ENCODE measurements at regions of chr17 and their contacts with region 1.

Region 1: DNA sequence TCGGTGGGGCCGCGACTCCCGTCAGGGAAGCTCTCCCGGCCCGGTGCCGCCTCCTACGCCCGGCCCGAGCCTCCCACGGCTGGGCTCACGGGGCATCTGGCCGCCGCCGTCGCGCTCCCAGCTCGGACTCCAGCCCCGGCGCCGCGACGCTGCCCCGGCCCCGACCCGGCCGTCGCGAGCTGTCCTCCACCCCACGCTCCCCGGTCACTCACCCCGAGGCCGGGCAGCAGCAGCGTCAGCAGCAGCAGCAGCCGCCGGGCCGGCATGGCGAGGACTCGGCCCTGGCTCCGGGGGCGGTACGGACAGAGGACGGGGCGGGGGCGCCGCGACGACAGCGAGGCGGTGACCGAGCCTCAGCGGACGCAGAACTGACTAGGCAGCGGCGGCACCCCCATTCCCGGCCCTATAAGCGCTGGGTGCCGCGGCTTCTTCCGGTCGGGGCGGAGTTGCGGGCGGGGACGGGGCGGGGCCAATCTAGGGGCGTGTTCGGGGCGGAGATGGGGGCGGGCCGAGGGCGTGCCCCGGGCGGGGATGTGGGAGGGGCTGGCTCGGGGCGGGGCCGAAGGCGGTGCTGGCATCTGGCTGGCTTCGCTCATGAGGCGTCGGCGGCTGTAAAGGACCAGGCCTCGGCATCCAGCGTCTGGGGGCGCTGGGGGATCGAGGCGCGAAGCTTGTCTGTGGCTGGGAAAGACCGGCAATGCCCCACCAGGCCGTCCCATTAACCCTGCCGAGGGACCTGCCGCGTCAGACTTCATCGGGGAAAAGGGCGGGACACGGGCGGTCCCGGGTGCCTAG is at the start of gene ERN1:
- DNase-seq: peak; percentile 92
- H3K4me3 Mint-ChIP-seq: peak within 1 kb of the TSS; percentile 90
- H3K27ac Mint-ChIP-seq: peak within 1 kb of the TSS; percentile 92
- H3K4me1 Mint-ChIP-seq: peaks cover 52% of the 10 kb centered on the region
- H3K27me3 Mint-ChIP-seq: no peaks in the 10 kb centered on the region
- total RNA-seq, gene ERN1: 21.9 to 22.0 TPM

Region 2: GRCh38 chr17:63919311-63919723 is 210.6 kb before region 1 on chr17:
- CTCF ChIA-PET with region 1: interaction called, 41 read pairs
- intact Hi-C with region 1: loop called (anchors 1 kb)
- DNase-seq: peak; percentile 86
- H3K4me3 Mint-ChIP-seq: no peak overlapping the region
- H3K27ac Mint-ChIP-seq: no peak overlapping the region
- H3K4me1 Mint-ChIP-seq: peaks cover 5% of the 10 kb centered on the region
- H3K27me3 Mint-ChIP-seq: no peaks in the 10 kb centered on the region

Region 3: GRCh38 chr17:64051153-64051552 is 78.8 kb before region 1 on chr17:
- CTCF ChIA-PET with region 1: interaction called, 20 read pairs
- intact Hi-C with region 1: no loop called
- DNase-seq: no peak
- H3K4me3 Mint-ChIP-seq: no peak overlapping the region
- H3K27ac Mint-ChIP-seq: peak overlapping the region; percentile 72
- H3K4me1 Mint-ChIP-seq: peaks cover 27% of the 10 kb centered on the region
- H3K27me3 Mint-ChIP-seq: no peaks in the 10 kb centered on the region

Region 4: GRCh38 chr17:64073771-64074703 is 55.9 kb before region 1 on chr17:
- CTCF ChIA-PET with region 1: interaction called, 17 read pairs
- intact Hi-C with region 1: no loop called
- DNase-seq: no peak
- H3K4me3 Mint-ChIP-seq: no peak overlapping the region
- H3K27ac Mint-ChIP-seq: no peak overlapping the region
- H3K4me1 Mint-ChIP-seq: peaks cover 22% of the 10 kb centered on the region
- H3K27me3 Mint-ChIP-seq: no peaks in the 10 kb centered on the region

Region 5: DNA sequence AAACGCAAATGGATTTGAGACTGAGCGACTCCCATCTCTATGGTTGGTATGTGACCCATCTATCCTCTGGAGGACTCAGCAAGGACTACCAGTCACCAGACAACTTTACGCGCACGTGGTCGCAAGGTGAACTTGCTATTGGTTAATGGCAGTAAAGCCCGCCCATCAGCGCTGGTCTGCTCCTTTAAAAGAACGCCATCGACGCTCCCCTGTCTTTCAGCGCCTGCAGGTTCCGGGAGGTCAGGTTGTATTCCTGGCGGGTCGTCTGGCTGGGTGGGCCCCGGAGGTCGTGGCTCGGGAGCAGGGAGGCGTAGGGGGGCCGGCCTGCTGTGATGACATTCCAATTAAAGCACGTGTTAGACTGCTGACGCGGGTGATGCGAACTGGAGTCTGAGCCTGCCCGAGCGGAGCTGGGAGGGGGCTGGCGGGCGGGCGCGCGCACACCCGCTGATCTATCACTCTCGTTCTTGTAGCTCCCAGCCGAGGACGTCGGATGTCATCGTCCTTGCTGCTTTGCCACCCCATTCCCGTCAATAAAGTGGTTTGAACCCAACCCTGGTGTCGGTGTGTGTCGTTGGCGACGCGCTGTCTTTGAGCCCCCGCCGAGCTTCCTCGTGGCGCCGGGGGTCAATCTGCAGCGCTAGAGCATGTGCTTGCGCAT is 15.9 kb after region 1 on chr17:
- CTCF ChIA-PET with region 1: interaction called, 22 read pairs
- intact Hi-C with region 1: loop called (anchors 1 kb)
- DNase-seq: peak; percentile 97
- H3K4me3 Mint-ChIP-seq: no peak overlapping the region
- H3K27ac Mint-ChIP-seq: no peak overlapping the region
- H3K4me1 Mint-ChIP-seq: peaks cover 16% of the 10 kb centered on the region
- H3K27me3 Mint-ChIP-seq: no peaks in the 10 kb centered on the region

Region 6: GRCh38 chr17:64262417-64263260 is 132.7 kb after region 1 on chr17 and contains the start of gene TEX2:
- CTCF ChIA-PET with region 1: no interaction called
- intact Hi-C with region 1: no loop called
- DNase-seq: peak; percentile 76
- H3K4me3 Mint-ChIP-seq: peak within 1 kb of the TSS; percentile 90
- H3K27ac Mint-ChIP-seq: peak within 1 kb of the TSS; percentile 88
- H3K4me1 Mint-ChIP-seq: peaks cover 39% of the 10 kb centered on the region
- H3K27me3 Mint-ChIP-seq: no peaks in the 10 kb centered on the region
- total RNA-seq, gene TEX2: 9.2 to 10.6 TPM

Region 7: GRCh38 chr17:65191811-65192740 is 1062.1 kb after region 1 on chr17:
- CTCF ChIA-PET with region 1: no interaction called
- intact Hi-C with region 1: no loop called
- DNase-seq: peak; percentile 24
- H3K4me3 Mint-ChIP-seq: no peak overlapping the region
- H3K27ac Mint-ChIP-seq: no peak overlapping the region
- H3K4me1 Mint-ChIP-seq: peaks cover 17% of the 10 kb centered on the region
- H3K27me3 Mint-ChIP-seq: peaks cover 2% of the 10 kb centered on the region

Measured in activated naive CD4-positive, alpha-beta T cell treated with anti-CD3 and anti-CD28 coated beads for 36 hours (primary cell).